ENCODE measurements at regions of chr4 and their contacts with region 1.

Region 1: DNA sequence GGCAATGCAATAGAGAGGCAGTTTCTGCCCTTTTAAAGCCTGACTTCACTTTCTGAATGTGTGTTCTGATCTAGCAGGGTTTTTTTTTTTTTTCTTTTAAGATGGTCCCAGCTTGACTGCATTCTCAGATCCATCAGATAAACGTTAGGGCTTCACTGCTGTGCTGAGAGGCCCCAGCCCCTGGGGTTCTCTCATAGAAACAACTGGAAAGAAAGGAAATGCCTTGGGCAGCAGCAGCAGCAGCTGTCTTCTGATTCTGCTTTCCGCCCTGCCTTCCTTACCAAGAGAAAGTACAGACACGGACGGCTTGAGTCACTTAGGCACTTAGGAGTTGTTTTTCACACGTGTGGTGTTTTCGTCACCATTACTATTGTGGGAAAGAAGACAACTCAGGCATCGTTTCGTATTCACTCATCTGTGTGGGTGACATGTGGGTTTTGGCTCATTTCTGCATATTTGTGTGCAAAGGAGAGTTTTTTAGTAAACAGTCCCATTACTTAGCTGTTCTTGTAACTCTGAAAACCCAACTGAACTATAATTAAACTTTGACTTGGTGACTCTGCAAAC is 172.0 kb downstream of the PTTG2 start:
- DNase-seq: peak; percentile 84
- ATAC-seq: peak; percentile 62
- H3K4me3 Mint-ChIP-seq: peak overlapping the region; percentile 57
- H3K27ac Mint-ChIP-seq: peak overlapping the region; percentile 96
- H3K4me1 Mint-ChIP-seq: peaks cover 74% of the 10 kb centered on the region
- H3K27me3 Mint-ChIP-seq: peaks cover 3% of the 10 kb centered on the region

Region 2: DNA sequence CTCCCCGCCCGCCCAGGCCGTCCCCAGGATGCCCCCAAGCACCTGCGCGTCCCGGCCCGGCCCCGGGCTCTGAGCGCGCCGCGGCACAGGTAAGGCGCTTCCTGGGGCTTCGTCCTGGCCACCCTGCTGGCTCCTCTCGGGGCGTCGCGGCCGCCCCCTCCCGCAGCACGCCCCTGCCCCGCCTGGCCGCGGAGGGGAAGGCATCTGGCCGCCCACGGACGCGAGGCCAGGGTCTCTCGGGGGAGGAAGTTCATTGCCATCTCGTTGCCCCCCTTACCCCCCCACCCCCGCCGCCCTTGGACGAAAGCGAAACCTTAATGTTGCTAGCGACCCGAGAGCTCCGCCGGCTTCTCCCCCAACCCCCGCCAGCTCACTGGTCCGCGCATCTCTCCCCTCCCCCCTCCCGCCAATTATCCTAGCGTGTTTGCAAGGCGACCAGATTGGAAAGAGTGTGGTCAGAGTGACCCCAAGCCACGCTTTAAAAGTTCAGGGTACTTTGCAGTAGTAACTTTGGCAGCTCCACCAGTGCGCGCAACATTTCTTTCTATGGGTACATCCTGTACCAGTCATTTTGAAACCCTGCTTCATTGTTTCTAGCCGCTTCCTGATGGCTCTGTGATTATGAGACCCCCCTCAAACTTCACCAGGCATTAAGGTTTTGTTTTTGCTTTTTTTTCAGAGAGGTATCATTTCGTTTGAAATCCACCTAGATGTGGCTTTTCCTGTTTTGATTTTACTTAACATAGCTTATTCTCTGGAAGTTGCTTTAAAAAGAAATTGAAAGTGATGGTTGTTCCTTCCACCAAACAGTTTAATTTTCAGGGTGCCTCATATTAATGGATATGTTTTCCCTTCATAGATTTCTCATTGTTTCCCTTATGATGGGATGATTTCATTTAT is 240.7 kb before region 1 on chr4:
- CTCF ChIA-PET with region 1: interaction called, 3 read pairs
- POLR2A ChIA-PET with region 1: no interaction called
- intact Hi-C with region 1: loop called (anchors 1 to 5 kb)
- DNase-seq: peak; percentile 73
- ATAC-seq: peak; percentile 78
- H3K4me3 Mint-ChIP-seq: peak overlapping the region; percentile 78
- H3K27ac Mint-ChIP-seq: peak overlapping the region; percentile 93
- H3K4me1 Mint-ChIP-seq: peaks cover 35% of the 10 kb centered on the region
- H3K27me3 Mint-ChIP-seq: peaks cover 3% of the 10 kb centered on the region

Region 3: DNA sequence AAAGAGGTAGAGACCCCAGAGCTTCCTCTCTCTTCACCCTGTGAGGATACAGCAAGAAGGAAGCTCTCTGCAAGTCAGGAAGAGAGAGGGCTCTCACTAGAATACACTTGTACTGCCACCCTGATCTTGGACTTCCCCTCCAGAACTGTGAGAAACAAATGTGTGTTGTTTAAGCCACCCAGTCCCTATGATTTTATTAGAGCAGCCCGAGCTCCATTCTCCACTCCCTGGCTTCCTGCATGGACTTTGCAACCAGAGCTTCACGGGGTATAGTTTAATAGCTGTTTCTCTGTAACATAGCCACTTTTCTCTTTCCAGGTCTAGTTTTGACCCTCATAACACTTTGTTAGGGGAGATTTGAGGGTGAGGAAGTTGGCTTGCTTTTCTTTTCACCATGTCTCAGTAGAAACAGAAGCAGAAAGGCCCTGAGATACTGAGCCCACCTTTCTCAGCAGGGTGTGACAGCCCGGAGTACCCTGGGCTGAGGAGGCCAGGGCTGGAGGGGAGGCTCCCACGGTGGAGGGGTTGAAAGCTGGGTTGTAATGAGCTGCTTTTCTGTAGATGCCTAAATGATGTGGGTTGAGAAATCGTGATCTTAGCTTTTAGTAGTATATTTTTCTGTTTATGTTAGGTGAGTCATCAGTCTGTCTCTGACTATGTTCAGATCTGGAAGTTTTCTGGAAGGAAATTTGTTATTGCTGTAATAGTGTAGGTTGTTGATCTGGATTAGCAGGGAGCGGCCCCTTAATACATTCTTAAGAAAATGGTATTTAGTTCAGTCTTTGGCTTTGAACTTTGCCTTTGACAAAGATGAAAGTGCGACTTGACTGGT is 53.4 kb before region 1 on chr4:
- CTCF ChIA-PET with region 1: interaction called, 3 read pairs
- POLR2A ChIA-PET with region 1: interaction called, 3 read pairs
- intact Hi-C with region 1: loop called in 1 of 2 experiments (anchors 5 kb)
- DNase-seq: peak; percentile 18
- ATAC-seq: peak; percentile 68
- H3K4me3 Mint-ChIP-seq: no peak overlapping the region
- H3K27ac Mint-ChIP-seq: peak overlapping the region; percentile 20
- H3K4me1 Mint-ChIP-seq: peaks cover 34% of the 10 kb centered on the region
- H3K27me3 Mint-ChIP-seq: no peaks in the 10 kb centered on the region

Region 4: GRCh38 chr4:38523524-38524448 is 391.6 kb after region 1 on chr4:
- CTCF ChIA-PET with region 1: no interaction called
- POLR2A ChIA-PET with region 1: interaction called, 6 read pairs
- intact Hi-C with region 1: loop called (anchors 1 to 5 kb)
- DNase-seq: peak; percentile 76
- ATAC-seq: peak; percentile 88
- H3K4me3 Mint-ChIP-seq: peak overlapping the region; percentile 9
- H3K27ac Mint-ChIP-seq: peak overlapping the region; percentile 58
- H3K4me1 Mint-ChIP-seq: peaks cover 20% of the 10 kb centered on the region
- H3K27me3 Mint-ChIP-seq: peaks cover 4% of the 10 kb centered on the region

Region 5: DNA sequence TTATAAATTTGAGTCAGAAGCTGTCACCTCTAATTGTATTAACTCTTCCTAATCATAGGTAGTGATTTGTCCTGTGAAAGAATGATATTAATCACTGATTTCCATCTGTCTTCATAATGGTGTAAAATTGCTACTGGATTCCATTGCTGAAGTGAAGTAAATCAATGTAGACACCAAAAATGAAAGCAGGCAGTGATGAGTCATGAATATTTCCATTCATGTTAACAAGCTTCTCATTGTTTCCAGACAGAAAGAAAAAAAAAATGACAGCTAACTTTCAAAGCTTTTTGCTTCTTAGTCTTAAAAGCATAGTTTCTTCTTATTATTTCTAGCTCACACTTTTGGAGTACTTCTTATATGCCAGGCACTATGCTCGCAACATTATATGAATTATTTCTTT is 757.0 kb after region 1 on chr4:
- CTCF ChIA-PET with region 1: no interaction called
- POLR2A ChIA-PET with region 1: no interaction called
- intact Hi-C with region 1: loop called in 1 of 2 experiments (anchors 1 kb)
- DNase-seq: no peak
- ATAC-seq: peak; percentile 78
- H3K4me3 Mint-ChIP-seq: peak overlapping the region; percentile 52
- H3K27ac Mint-ChIP-seq: peak overlapping the region; percentile 88
- H3K4me1 Mint-ChIP-seq: peaks cover 18% of the 10 kb centered on the region
- H3K27me3 Mint-ChIP-seq: no peaks in the 10 kb centered on the region